Ascending aorta (tissue), 2 donors: ENCODE measurements at regions of chr19 and their contacts with region 1.

Region 1: GRCh38 chr19:6048808-6049405 is 61.4 kb downstream of the RFX2 start:
- DNase-seq: peak in 1 of 2 donors; percentile 89
- H3K4me3 ChIP-seq: peak overlapping the region in 1 of 2 donors; percentile 10
- H3K27ac ChIP-seq: no peak overlapping the region
- H3K4me1 ChIP-seq: peaks cover 0 to 11% of the 10 kb centered on the region in 2 donors
- H3K27me3 ChIP-seq: no peaks in the 10 kb centered on the region
- CTCF ChIP-seq: peak; percentile 87 to 92 (median 88)

Region 2: GRCh38 chr19:6125571-6125989 is 76.7 kb after region 1 on chr19:
- intact Hi-C with region 1: loop called (anchors 1 kb)
- DNase-seq: peak in 1 of 2 donors; percentile 80
- H3K4me3 ChIP-seq: no peak overlapping the region
- H3K27ac ChIP-seq: no peak overlapping the region
- H3K4me1 ChIP-seq: no peaks in the 10 kb centered on the region
- H3K27me3 ChIP-seq: no peaks in the 10 kb centered on the region
- CTCF ChIP-seq: peak; percentile 90 to 98 (median 95)